ENCODE measurements at regions of chr13 and their contacts with region 1.

Region 1: GRCh38 chr13:28819735-28820098 is 422 bp upstream of the MTUS2 start:
- DNase-seq: peak; percentile 44 to 77
- ATAC-seq: peak; percentile 70 to 96 (median 85)
- H3K4me3 ChIP-seq: peak overlapping the region in 9 of 10 donors; percentile 21 to 59 (median 43)
- H3K27ac ChIP-seq: peak overlapping the region in 2 of 10 donors; percentile 22 to 59
- H3K4me1 ChIP-seq: peaks cover 0 to 19% (median 5%) of the 10 kb centered on the region in 9 donors
- H3K27me3 ChIP-seq: peaks cover 0 to 71% (median 43%) of the 10 kb centered on the region in 7 donors
- CTCF ChIP-seq: peak in 5 of 9 donors; percentile 17 to 52 (median 34)

Region 2: GRCh38 chr13:28761586-28761985 is 58.1 kb before region 1 on chr13:
- intact Hi-C with region 1: no loop called
- DNase-seq: no peak
- ATAC-seq: no peak
- H3K4me3 ChIP-seq: no peak overlapping the region
- H3K27ac ChIP-seq: no peak overlapping the region
- H3K4me1 ChIP-seq: no peaks in the 10 kb centered on the region
- H3K27me3 ChIP-seq: no peaks in the 10 kb centered on the region
- CTCF ChIP-seq: no peak

Region 3: GRCh38 chr13:28953714-28954418 is 134.1 kb after region 1 on chr13:
- intact Hi-C with region 1: loop called in 3 of 10 experiments (anchors 5 to 10 kb)
- DNase-seq: no peak
- ATAC-seq: no peak
- H3K4me3 ChIP-seq: no peak overlapping the region
- H3K27ac ChIP-seq: peak overlapping the region in 7 of 10 donors; percentile 24 to 87 (median 78)
- H3K4me1 ChIP-seq: peaks cover 0 to 21% (median 4%) of the 10 kb centered on the region in 9 donors
- H3K27me3 ChIP-seq: no peaks in the 10 kb centered on the region
- CTCF ChIP-seq: no peak

Region 4: GRCh38 chr13:29065142-29065541 is 245.4 kb after region 1 on chr13:
- intact Hi-C with region 1: loop called in 1 of 10 experiments (anchors 5 kb)
- DNase-seq: no peak
- ATAC-seq: no peak
- H3K4me3 ChIP-seq: no peak overlapping the region
- H3K27ac ChIP-seq: no peak overlapping the region
- H3K4me1 ChIP-seq: no peaks in the 10 kb centered on the region
- H3K27me3 ChIP-seq: no peaks in the 10 kb centered on the region
- CTCF ChIP-seq: no peak

Region 5: DNA sequence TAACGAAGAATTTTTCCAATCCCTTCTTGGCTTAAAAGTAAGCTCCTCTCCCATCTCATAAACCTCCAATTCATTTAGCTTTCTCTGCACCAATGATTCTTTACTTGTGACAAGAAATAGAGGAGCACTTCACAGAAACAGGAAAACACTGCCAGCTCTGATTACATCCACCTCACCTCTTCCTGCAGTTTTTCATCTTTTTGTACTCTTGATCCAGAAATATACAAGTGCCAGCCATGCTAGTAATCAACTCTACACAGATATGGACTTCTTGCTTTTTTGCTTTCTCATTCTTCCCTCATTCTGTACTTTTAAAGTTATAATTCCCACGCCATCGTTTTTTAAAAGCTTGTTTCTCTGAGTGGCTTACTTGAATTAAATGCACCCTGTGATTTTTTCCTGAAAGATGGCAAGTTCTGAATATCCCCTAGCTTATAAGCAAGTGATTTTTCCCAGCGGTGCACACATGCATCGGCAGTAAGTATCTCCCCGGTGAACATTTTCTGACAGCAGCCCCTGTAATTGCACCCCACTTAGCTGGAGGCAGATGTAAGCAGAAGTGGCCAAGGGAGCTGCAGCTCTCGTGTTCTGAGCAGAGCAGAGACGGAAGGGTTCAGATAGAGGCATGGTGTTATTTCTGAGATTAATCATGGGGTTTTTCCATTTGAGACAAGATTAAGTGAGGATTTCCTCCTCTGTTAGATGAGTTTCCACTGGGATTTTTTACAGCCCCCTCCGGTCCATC is 435.1 kb after region 1 on chr13:
- intact Hi-C with region 1: loop called in 1 of 10 experiments (anchors 5 kb)
- DNase-seq: no peak
- ATAC-seq: no peak
- H3K4me3 ChIP-seq: no peak overlapping the region
- H3K27ac ChIP-seq: no peak overlapping the region
- H3K4me1 ChIP-seq: no peaks in the 10 kb centered on the region
- H3K27me3 ChIP-seq: peaks cover 0 to 3% (median 0%) of the 10 kb centered on the region in 7 donors
- CTCF ChIP-seq: no peak

Region 6: DNA sequence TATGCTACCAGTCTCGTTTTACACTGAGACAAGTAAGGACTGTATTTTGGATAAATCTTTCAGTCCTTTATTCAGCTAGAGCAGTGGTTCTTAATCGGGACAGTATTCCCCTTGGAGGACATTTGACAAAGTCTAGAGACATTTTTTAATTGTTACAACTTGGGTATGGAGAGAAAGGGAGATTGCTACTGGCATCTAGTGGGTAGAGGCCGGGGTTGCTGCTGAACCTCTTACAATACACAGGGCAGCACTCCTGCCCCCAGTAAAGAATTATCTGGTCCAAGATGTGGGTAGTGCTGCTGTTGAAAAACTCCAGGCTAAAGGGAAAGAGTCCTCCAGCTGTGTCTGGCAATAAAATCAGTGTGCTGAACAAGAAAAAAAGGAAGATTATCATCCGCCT is 441.0 kb after region 1 on chr13:
- intact Hi-C with region 1: loop called in 8 of 10 experiments (anchors 2 to 10 kb)
- DNase-seq: no peak
- ATAC-seq: peak in 7 of 8 donors; percentile 29 to 82 (median 75)
- H3K4me3 ChIP-seq: no peak overlapping the region
- H3K27ac ChIP-seq: no peak overlapping the region
- H3K4me1 ChIP-seq: peaks cover 0 to 7% (median 0%) of the 10 kb centered on the region in 9 donors
- H3K27me3 ChIP-seq: peaks cover 0 to 3% (median 0%) of the 10 kb centered on the region in 7 donors
- CTCF ChIP-seq: peak in 8 of 9 donors; percentile 6 to 58 (median 44)

Region 7: GRCh38 chr13:29362849-29363604 is 543.3 kb after region 1 on chr13:
- intact Hi-C with region 1: loop called in 5 of 10 experiments (anchors 2 to 10 kb)
- DNase-seq: peak in 1 of 2 donors; percentile 24
- ATAC-seq: peak; percentile 67 to 89 (median 82)
- H3K4me3 ChIP-seq: no peak overlapping the region
- H3K27ac ChIP-seq: no peak overlapping the region
- H3K4me1 ChIP-seq: no peaks in the 10 kb centered on the region
- H3K27me3 ChIP-seq: no peaks in the 10 kb centered on the region
- CTCF ChIP-seq: peak; percentile 46 to 87 (median 81)

Region 8: DNA sequence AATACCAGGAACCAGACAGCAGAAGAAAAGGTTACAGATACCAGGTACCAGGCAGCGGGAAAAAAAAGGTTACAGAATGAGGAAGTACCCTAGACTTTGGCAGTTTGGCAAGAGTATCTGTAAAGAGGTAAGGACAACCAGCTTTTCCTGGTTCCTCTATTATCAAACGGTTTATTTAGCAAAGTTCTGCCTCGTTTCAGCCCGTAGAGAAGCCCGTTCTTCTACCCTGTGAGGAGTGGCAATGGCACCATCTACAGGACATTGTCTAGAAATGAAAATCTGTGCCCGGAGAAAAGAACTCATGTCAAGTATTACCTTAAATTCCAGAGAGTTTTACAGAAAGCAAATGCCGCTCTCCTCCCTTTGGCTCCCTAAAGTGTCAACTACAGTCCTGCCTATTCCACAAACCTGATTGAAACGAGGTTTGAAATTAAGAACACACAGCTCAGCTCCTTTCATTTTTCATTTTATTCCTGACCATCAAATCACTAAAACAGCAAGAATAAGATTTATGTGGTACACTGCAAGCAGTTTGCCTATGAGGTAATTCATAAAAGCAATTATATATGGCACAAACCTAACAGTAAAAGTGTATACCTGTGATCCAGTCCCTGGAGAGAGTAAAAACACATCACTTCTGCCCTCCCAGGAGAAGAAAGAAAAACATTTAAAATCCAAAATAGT is 549.5 kb after region 1 on chr13:
- intact Hi-C with region 1: loop called in 4 of 10 experiments (anchors 5 to 10 kb)
- DNase-seq: no peak
- ATAC-seq: peak in 4 of 8 donors; percentile 28 to 57 (median 38)
- H3K4me3 ChIP-seq: no peak overlapping the region
- H3K27ac ChIP-seq: no peak overlapping the region
- H3K4me1 ChIP-seq: no peaks in the 10 kb centered on the region
- H3K27me3 ChIP-seq: peaks cover 0 to 4% (median 0%) of the 10 kb centered on the region in 7 donors
- CTCF ChIP-seq: peak in 8 of 9 donors; percentile 25 to 62 (median 49)

Measured in heart right ventricle (tissue), 16 donors.